Right cardiac atrium (tissue), 5 donors: ENCODE measurements at regions of chrX and their contacts with region 1.

Region 1: DNA sequence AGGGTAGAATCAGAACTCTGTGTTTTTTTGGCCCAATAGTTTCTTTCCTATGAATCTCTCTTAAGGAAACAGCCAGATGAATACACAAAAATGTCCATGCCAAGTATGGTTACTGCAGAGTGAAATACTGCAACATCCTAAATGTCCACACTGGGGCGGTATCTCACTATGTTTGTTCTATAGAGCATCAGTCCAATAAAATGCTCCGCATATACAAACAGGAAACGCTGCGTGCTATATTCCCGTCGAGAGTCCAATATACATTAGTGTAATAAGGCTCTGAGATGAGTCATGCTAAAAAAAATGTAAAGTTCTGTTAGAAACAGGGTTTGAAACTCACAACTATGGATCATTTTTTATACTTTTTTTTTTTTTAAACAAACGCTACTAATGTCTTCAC is 72.9 kb upstream of the ENOX2 start:
- DNase-seq: no peak
- ATAC-seq: peak in 1 of 2 donors; percentile 23
- H3K4me3 ChIP-seq: no peak overlapping the region
- H3K27ac ChIP-seq: no peak overlapping the region
- H3K4me1 ChIP-seq: no peaks in the 10 kb centered on the region
- H3K27me3 ChIP-seq: no peaks in the 10 kb centered on the region

Region 2: DNA sequence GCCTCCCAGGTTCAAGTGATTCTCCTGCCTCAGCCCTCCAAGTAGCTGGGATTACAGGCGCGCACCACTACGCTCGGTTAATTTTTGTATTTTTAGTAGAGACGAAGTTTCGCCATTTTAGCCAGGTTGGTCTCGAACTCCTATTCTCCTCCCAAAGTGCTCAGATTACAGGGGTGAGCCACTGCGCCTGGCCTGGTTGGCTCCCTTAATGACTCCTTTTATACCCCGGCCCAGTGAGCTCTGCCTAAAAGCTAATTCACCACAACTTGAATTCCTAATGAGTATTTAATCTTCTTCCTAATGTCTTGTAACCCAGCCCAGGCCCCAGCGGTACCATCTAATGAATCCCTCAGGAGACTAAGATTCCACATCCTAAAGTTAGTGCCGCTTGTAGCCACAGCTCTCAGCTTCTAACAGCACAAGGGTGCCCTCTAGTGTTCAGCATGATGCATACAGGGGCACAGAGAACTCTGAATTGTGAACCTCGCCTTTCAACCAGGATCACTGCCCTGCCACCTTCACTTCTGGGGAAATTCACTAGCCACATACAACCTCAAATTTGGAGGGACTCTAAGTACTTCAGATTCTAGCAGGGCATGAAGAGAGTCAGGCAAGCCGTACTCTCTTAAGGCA is 657.5 kb after region 1 on chrX:
- intact Hi-C with region 1: loop called in 1 of 4 experiments (anchors 5 kb)
- DNase-seq: peak in 1 of 3 donors; percentile 31
- ATAC-seq: peak in 1 of 2 donors; percentile 74
- H3K4me3 ChIP-seq: no peak overlapping the region
- H3K27ac ChIP-seq: no peak overlapping the region
- H3K4me1 ChIP-seq: no peaks in the 10 kb centered on the region
- H3K27me3 ChIP-seq: no peaks in the 10 kb centered on the region

Region 3: DNA sequence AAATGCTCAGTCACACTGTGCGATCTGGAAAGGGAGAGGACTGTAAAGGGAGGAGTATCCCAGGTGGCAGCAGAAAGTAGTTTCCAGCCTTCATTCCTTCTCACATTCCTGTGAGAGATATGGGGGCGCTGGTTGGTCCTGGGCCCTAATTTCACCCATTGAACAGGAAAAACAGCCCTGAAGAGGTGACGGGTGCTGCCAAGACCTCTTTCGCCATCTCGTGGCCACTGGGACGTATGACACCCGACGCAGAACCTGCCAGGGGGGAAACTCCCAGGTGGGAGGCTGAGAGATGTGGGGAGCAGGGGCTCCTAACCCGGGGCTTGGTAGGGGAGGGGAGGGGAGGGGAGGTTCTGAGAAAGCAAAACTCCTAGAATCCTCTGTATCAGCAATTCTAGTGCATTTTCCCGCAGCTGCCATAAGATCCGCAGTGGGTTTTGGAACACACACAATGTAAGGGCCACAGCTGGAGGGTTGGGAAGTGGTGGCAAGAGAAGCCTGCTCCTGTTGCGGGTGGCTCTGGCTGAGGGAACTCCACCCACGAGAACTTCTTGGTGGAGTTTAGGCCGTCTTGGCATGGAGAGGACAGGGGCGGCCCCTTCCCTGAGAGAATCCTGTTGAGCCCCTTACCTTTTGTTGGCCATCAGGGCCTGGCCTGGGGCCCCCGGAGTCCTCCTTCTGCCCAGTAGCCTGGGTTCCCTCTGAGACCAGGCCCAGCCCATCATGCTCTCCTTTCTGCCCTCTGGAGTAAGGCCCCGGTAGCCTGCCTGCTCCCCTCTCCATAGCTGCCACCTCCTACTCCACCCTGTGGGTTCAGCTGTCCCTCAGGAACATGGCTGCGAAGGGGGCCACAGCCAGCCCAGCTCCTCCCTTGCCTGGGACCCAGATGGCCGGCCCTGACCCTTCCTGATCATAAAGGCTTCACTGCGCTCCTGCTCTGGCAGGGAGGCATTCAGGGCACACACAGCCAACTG is 702.0 kb after region 1 on chrX:
- intact Hi-C with region 1: loop called in 1 of 4 experiments (anchors 10 kb)
- DNase-seq: peak; percentile 15 to 67 (median 25)
- ATAC-seq: peak in 1 of 2 donors; percentile 47
- H3K4me3 ChIP-seq: no peak overlapping the region
- H3K27ac ChIP-seq: no peak overlapping the region
- H3K4me1 ChIP-seq: no peaks in the 10 kb centered on the region
- H3K27me3 ChIP-seq: no peaks in the 10 kb centered on the region

Region 4: GRCh38 chrX:131725001-131725654 is 749.2 kb after region 1 on chrX:
- intact Hi-C with region 1: no loop called
- DNase-seq: no peak
- ATAC-seq: no peak
- H3K4me3 ChIP-seq: no peak overlapping the region
- H3K27ac ChIP-seq: no peak overlapping the region
- H3K4me1 ChIP-seq: no peaks in the 10 kb centered on the region
- H3K27me3 ChIP-seq: no peaks in the 10 kb centered on the region